Activated naive CD4-positive, alpha-beta T cell treated with anti-CD3 and anti-CD28 coated beads, Interleukin-2, amount 10 ng/mL, durations not matched to agents 7 days and 5 days (primary cell): ENCODE measurements at regions of chr1 and their contacts with region 1.

Region 1: GRCh38 chr1:235866913-235867845 is 473 bp upstream of the LYST start:
- DNase-seq: peak; percentile 97
- H3K4me3 Mint-ChIP-seq: peak overlapping the region; percentile 100
- H3K27ac Mint-ChIP-seq: peak overlapping the region; percentile 98
- H3K4me1 Mint-ChIP-seq: peaks cover 47% of the 10 kb centered on the region
- H3K27me3 Mint-ChIP-seq: no peaks in the 10 kb centered on the region

Region 2: DNA sequence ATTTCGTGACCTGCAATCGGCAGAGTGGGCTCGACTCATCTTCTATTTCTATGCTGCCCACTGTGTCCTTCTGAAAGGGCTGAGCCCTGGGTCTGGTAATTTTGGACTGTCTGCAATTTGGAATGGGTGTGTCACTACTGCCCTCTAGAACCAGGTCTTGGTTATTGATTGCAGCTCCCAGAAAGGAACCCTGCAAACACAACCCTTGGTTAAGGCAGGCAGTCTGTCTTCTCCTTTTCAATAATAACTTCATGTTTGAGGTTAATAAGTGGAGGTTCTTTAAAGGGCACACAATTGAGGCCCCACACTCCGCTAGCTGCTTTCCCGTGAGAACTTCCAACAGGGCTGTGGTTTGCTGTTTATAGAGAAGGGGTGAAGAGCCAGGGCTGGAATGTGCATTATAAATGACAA is 79.4 kb after region 1 on chr1:
- CTCF ChIA-PET with region 1: interaction called, 17 read pairs
- DNase-seq: no peak
- H3K4me3 Mint-ChIP-seq: no peak overlapping the region
- H3K27ac Mint-ChIP-seq: peak overlapping the region; percentile 25
- H3K4me1 Mint-ChIP-seq: peaks cover 7% of the 10 kb centered on the region
- H3K27me3 Mint-ChIP-seq: no peaks in the 10 kb centered on the region

Region 3: DNA sequence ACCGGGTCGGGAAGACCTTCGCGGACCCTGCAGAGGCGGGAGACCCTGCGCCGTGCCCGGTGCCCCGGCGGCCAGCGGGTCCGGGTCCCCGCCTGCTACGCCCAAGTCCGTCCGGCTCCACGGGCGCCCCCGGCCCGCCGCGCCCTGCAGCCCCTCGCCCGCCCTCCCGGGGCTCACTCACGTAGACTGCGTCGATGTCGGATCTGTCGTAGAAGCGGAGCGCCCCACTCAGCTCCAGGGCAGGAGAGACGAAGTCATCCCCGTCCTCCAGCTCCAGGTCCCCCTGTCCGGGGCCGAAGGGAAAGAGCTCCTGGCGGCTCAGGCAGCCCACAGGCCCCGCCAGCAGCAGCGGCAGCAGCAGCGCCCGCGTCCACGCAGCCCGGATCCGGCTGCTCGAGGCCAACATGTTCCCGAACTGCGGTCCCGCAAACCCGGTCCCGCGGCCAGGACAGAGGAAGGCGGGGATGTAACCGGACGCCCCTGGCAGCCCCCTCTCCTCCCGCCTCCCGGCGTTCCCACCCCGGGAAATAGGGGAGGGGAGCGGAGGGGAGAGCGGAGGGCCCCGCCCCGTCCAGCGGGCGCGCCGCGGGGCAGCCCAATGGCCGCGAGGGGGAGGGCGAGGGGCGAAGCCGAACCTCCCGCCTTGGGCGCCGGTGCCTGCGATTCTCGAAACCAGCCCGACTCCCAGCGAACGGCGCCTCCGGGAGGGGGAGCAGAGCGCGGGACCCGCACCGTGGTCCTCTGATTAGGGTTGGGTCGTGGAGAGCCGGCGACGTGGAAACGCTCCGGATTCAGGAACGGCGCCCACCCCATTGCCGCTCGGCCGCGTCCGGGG is 197.7 kb after region 1 on chr1 and contains the start of gene NID1:
- CTCF ChIA-PET with region 1: no interaction called
- DNase-seq: peak; percentile 32
- H3K4me3 Mint-ChIP-seq: peak within 1 kb of the TSS; percentile 42
- H3K27ac Mint-ChIP-seq: no peak within 1 kb of the TSS
- H3K4me1 Mint-ChIP-seq: peaks cover 25% of the 10 kb centered on the region
- H3K27me3 Mint-ChIP-seq: peaks cover 70% of the 10 kb centered on the region